Caco-2 (cell line): ENCODE measurements at regions of chr16 and their contacts with region 1.

Region 1: GRCh38 chr16:46673320-46674013 is 15.5 kb downstream of the VPS35 start:
- DNase-seq: peak; percentile 62 to 67
- H3K4me3 ChIP-seq: no peak overlapping the region
- H3K4me3 Mint-ChIP-seq: no peak overlapping the region
- H3K27ac Mint-ChIP-seq: no peak overlapping the region
- H3K4me1 ChIP-seq: peaks cover 2% of the 10 kb centered on the region; the same call in 1 of the 2 replicates
- H3K4me1 Mint-ChIP-seq: peaks cover 3% of the 10 kb centered on the region
- H3K27me3 ChIP-seq: no peaks in the 10 kb centered on the region
- H3K27me3 Mint-ChIP-seq: no peaks in the 10 kb centered on the region
- CTCF ChIP-seq: peak; percentile 79 to 97

Region 2: DNA sequence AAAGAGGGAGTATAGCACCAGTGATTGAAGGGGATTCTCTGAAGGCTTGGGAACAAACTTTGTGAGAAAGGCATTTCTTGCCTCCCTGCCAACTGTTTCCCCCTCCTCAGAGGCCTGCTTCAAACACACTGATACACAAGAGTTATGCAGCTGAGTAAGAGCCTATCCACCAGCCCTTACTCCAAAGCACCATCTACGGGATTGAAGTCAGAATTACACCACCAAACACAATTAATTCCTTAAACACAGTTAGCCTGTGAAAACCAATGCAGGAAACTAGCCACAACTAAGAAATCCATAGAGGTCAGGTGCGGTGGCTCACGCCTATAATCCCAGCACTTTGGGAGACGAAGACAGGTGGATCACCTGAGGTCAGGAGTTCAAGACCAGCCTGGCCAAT is 190.6 kb before region 1 on chr16:
- CTCF ChIA-PET with region 1: no interaction called
- POLR2A ChIA-PET with region 1: no interaction called
- intact Hi-C with region 1: no loop called
- DNase-seq: peak in 1 of 2 experiments; percentile 11
- H3K4me3 ChIP-seq: no peak overlapping the region
- H3K4me3 Mint-ChIP-seq: no peak overlapping the region
- H3K27ac Mint-ChIP-seq: no peak overlapping the region
- H3K4me1 ChIP-seq: no peaks in the 10 kb centered on the region
- H3K4me1 Mint-ChIP-seq: no peaks in the 10 kb centered on the region
- H3K27me3 ChIP-seq: no peaks in the 10 kb centered on the region
- H3K27me3 Mint-ChIP-seq: peaks cover 4% of the 10 kb centered on the region
- CTCF ChIP-seq: no peak

Region 3: DNA sequence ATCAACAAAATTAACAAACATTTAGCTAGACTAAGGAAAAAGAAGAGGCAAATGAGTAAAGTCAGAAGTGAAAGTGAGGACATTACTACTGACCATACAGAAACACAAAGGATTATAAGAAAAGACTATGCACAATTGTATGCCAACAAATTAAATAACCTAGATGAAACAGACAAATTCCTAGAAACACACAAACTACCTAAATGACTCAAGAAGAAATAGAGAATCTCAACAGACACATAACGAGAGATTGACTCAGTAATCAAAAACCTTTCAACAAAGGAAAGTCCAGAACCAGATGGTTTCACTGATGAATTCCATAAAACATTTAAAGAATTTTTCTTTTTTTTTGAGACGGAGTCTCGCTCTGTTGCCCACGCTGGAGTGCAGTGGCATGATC is 110.3 kb after region 1 on chr16:
- CTCF ChIA-PET with region 1: no interaction called
- POLR2A ChIA-PET with region 1: no interaction called
- intact Hi-C with region 1: no loop called
- DNase-seq: no peak
- H3K4me3 ChIP-seq: no peak overlapping the region
- H3K4me3 Mint-ChIP-seq: no peak overlapping the region
- H3K27ac Mint-ChIP-seq: no peak overlapping the region
- H3K4me1 ChIP-seq: peaks cover 20% of the 10 kb centered on the region
- H3K4me1 Mint-ChIP-seq: peaks cover 21% of the 10 kb centered on the region
- H3K27me3 ChIP-seq: no peaks in the 10 kb centered on the region
- H3K27me3 Mint-ChIP-seq: no peaks in the 10 kb centered on the region
- CTCF ChIP-seq: no peak

Region 4: DNA sequence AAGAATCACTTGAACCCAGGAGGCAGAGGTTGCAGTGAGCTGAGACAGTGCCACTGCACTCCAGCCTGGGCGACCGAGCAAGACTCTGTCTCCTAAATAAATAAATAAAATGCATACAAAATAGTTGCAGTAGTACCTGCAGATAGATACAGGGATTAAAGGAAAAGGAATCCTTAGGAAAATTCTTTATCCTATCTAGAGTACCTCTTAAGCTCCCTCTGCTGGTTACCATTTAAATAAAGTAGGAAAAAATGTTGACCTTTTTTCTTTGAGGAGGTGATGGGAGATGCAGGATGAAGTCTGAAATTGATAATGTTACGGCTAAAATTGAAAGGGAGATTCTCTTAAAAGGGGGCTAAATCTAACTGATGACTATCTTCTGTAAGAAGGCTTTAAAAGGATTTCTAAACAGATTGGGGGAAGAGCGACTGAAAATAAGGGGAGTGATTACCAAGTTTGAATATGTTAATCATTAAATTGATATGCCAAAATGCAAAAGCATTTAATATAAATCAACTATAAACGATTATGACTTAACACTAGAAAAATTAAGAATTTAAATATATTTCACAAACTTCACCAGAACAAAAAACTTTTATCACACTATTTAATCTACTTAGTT is 128.1 kb after region 1 on chr16:
- CTCF ChIA-PET with region 1: interaction called, 18 read pairs
- POLR2A ChIA-PET with region 1: no interaction called
- intact Hi-C with region 1: loop called (anchors 1 kb)
- DNase-seq: peak in 1 of 2 experiments; percentile 24
- H3K4me3 ChIP-seq: no peak overlapping the region
- H3K4me3 Mint-ChIP-seq: no peak overlapping the region
- H3K27ac Mint-ChIP-seq: no peak overlapping the region
- H3K4me1 ChIP-seq: peaks cover 4% of the 10 kb centered on the region
- H3K4me1 Mint-ChIP-seq: peaks cover 6% of the 10 kb centered on the region
- H3K27me3 ChIP-seq: no peaks in the 10 kb centered on the region
- H3K27me3 Mint-ChIP-seq: no peaks in the 10 kb centered on the region
- CTCF ChIP-seq: peak; percentile 40 to 64

Region 5: DNA sequence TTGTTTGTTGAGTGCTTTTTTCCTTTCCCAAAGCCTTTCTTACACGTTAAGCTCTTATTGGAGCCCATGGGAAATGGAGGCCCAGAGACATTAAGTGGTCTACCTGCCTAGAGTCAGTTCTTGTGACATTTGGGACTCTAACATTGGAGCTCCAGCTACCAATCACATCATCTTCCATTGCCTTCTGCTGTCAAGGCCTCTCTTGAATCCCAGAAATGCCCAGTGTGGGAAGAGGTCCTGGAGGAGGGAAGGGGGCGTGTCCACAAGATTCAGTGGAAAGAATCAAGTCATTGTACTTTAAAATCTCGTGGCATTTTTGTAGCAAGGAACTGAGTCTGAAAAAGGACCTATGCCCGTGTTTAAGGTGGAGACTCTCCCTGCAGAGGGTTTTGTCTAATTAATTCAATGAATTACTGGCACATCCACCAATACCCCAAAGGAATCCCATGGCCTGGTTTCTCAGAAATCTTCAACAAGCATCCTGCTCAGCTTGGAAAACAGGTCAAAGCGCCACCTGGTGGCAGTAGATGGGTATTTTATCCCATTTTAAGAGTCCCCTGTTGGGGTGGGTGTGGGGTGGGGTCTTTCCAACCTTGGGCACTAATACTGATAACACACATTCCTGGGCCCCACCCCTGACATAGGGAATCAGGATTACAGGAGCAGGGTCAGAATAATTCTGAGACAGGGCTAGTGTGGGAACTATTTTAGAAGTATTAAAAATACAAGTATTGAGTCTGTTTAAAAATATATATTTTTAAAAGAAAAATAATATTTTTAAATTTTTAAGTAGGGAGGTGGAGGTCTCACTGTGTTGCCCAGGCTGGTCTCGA is 235.3 kb after region 1 on chr16:
- CTCF ChIA-PET with region 1: no interaction called
- POLR2A ChIA-PET with region 1: no interaction called
- intact Hi-C with region 1: loop called (anchors 10 kb)
- DNase-seq: peak; percentile 68 to 73
- H3K4me3 ChIP-seq: no peak overlapping the region
- H3K4me3 Mint-ChIP-seq: no peak overlapping the region
- H3K27ac Mint-ChIP-seq: no peak overlapping the region
- H3K4me1 ChIP-seq: peaks cover 6% of the 10 kb centered on the region; the same call in 1 of the 2 replicates
- H3K4me1 Mint-ChIP-seq: peaks cover 6% of the 10 kb centered on the region
- H3K27me3 ChIP-seq: no peaks in the 10 kb centered on the region
- H3K27me3 Mint-ChIP-seq: no peaks in the 10 kb centered on the region
- CTCF ChIP-seq: peak; percentile 69 to 77